Astrocyte of the cerebellum (primary cell): ENCODE measurements at regions of chr4 and their contacts with region 1.

Region 1: GRCh38 chr4:7759216-7759615 is 180.4 kb downstream of the AFAP1 start:
- DNase-seq: no peak
- H3K4me3 ChIP-seq: no peak overlapping the region
- CTCF ChIP-seq: no peak

Region 2: DNA sequence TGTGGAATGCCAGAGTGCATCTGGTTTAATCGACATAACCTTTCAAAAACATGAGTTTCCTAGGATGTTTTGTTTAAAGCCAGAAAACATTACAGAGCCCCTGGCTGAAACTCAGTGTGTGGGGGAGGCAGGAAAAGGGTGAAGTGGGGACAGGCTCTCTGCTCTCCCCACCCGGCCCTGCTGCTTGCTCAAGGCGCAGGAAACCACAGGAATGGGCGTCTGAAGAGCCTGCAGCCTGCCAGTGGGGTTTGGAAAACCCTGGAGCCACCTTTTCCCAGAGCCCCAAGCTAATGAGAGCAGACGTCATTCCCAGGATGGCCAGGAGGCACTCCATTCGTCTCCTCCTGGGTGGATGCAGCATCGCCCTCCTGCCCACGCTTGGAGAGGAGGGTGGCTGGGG is 60.2 kb before region 1 on chr4:
- in situ Hi-C with region 1: loop called (anchors 10 kb)
- DNase-seq: peak; percentile 53
- H3K4me3 ChIP-seq: no peak overlapping the region
- CTCF ChIP-seq: no peak